GM10248 (cell line): ENCODE measurements at regions of chr3 and their contacts with region 1.

Region 1: DNA sequence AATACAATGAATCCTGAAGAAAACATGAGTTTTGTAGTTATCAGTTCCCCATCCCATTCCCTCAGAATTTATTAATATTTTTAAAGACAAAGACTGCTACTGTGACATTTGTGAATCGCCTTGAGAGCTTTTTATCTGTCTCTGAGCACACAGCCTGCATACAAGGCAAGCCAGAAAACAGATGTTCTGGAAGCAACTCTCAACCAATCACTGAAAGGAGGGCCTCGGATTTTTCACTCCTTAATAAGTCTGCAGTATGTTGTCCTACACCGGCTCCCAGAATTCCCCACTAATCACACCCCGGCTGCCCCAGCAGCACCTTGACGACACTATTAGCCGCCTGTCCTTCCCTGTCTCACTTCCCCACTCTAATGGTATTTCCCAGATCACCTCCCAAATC is 138.5 kb downstream of the ZNF621 start:
- DNase-seq: no peak
- CTCF ChIP-seq: no peak

Region 2: DNA sequence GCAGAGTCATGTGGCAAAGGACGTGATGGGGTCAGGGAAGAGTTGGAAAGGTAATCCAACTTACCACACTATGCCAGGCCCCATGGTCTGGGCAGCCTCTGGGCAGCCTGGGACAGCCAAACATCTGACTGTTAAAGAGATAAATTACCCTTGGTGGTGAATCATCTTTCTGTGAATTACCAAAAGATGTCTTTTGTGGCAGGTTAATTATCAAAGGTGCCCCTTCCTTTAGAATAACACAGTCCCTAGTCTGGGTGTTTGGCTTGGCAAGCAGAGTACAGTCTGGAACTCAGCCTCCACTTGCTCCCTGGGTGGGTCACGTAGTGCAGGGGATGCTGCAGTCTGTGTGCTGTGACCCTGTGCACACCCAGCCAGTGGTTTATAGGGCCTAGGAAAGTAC is 25.4 kb before region 1 on chr3:
- CTCF ChIA-PET with region 1: no interaction called
- POLR2A ChIA-PET with region 1: no interaction called
- DNase-seq: no peak
- CTCF ChIP-seq: no peak

Region 3: GRCh38 chr3:40649346-40649745 is 13.9 kb before region 1 on chr3:
- CTCF ChIA-PET with region 1: interaction called, 11 read pairs
- POLR2A ChIA-PET with region 1: no interaction called
- DNase-seq: no peak
- CTCF ChIP-seq: no peak